ENCODE measurements at regions of chr15 and their contacts with region 1.

Region 1: GRCh38 chr15:45156744-45157455 is 27.1 kb downstream of the DUOX1 start:
- DNase-seq: no peak
- ATAC-seq: no peak
- H3K4me3 ChIP-seq: no peak overlapping the region
- H3K4me3 Mint-ChIP-seq: no peak overlapping the region
- H3K27ac ChIP-seq: no peak overlapping the region
- H3K27ac Mint-ChIP-seq: no peak overlapping the region
- H3K4me1 ChIP-seq: no peaks in the 10 kb centered on the region
- H3K4me1 Mint-ChIP-seq: no peaks in the 10 kb centered on the region
- H3K27me3 ChIP-seq: no peaks in the 10 kb centered on the region
- H3K27me3 Mint-ChIP-seq: no peaks in the 10 kb centered on the region
- CTCF ChIP-seq: no peak

Region 2: GRCh38 chr15:45265506-45265905 is 108.6 kb after region 1 on chr15:
- CTCF ChIA-PET with region 1: no interaction called
- POLR2A ChIA-PET with region 1: no interaction called
- intact Hi-C with region 1: loop called in 1 of 2 experiments (anchors 1 kb)
- DNase-seq: no peak
- ATAC-seq: no peak
- H3K4me3 ChIP-seq: no peak overlapping the region
- H3K4me3 Mint-ChIP-seq: no peak overlapping the region
- H3K27ac ChIP-seq: no peak overlapping the region
- H3K27ac Mint-ChIP-seq: no peak overlapping the region
- H3K4me1 ChIP-seq: no peaks in the 10 kb centered on the region
- H3K4me1 Mint-ChIP-seq: no peaks in the 10 kb centered on the region
- H3K27me3 ChIP-seq: no peaks in the 10 kb centered on the region
- H3K27me3 Mint-ChIP-seq: no peaks in the 10 kb centered on the region
- CTCF ChIP-seq: no peak

Measured in CD4-positive, alpha-beta T cell (primary cell).